ENCODE measurements at regions of chr2 and their contacts with region 1.

Region 1: DNA sequence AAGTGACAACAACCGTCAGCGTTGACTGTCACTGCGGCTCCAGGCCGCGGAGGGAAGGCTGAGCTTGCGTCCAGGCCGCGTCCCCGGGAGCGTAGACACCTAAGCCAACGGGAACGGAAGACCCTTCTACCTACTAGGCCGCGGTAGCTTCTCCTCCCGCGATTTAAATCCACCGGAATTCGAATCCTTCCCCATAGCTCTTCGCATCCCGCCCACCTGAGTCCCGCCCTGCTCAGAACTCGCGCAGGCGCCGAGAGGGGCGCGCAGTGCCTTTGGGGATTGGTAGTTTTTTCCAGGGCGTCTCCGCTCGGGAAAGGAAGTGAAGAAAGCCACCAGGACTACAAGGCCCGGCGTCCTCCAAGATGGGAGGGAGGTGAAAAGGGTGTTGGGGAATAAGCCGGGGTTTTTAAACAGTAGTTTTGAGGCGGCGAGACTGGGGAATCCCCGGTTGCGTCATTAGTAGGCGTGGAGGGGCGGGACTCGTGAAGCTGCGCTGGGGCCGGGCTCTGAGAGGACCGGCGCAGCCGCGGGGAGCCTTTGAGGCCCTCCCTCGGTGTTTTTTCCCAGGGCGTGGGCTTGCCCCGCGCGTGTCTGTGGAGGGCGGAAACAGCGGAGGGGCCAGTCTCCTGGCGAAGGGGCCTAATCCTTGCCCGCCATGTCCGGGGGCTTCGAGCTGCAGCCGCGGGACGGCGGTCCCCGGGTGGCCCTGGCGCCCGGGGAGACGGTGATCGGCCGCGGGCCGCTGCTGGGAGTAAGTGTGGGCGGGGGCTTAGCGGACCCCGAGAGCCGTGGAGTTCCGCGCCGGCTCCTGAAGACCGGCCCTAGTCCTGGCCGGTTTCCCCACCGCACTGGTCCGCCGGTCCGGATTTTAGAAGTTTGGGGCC is at the starts of genes APLF and FBXO48:
- DNase-seq: peak; percentile 91 to 92
- H3K4me3 ChIP-seq: peak within 1 kb of the TSS; percentile 84 to 95 (median 94)
- H3K27ac ChIP-seq: peak within 1 kb of the TSS; percentile 90
- H3K4me1 ChIP-seq: no peaks in the 10 kb centered on the region; a peak in 1 of 7 replicates
- H3K27me3 ChIP-seq: no peaks in the 10 kb centered on the region
- CTCF ChIP-seq: no peak
- EP300 ChIP-seq: no peak
- POLR2A ChIP-seq: peak; percentile 80 to 85
- RAD21 ChIP-seq: no peak
- total RNA-seq, gene APLF: 4.4 and 4.9 TPM in 2 replicates
- total RNA-seq, gene FBXO48: 1.1 TPM in 2 replicates

Region 2: DNA sequence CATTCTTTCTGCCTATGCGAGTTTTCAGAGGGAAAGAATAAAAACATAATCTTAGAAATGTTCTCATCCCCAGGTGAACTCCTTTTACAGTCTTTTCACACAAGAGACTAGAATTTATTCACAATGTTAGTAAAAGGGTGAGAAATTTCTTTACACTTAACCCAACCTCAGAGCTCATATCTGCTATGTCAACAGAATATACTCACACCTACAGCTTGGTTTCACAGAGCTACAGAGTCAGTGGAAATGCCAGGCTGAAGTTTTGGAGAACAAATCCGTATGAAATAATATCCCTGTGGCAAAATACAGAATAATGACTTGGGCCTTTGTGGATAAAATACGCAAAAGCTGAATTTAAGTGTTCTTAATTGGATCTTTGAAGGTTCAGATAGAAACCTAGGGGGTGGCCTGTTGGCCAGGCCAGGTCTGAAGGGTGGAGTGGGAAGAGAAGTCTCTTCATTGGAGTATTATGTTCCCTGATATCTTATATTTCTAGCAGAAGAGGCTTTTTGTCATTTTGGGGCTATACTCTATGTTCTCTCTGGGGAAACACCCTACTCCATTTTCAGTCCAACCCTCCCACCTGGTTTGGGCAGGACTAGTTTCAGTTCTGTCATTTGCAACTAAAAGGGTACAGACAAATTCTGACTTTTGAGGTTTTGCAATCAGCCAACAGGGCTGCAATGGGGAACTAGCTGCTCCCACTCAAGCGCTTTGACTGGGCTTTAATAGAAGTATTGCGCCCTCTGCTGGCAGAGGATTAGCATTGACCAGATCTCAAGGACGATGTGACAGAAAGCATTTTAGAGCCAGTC is 25.9 kb before region 1 on chr2:
- CTCF ChIA-PET with region 1: interaction called, 12 read pairs
- POLR2A ChIA-PET with region 1: no interaction called
- DNase-seq: peak; percentile 29 to 79
- H3K4me3 ChIP-seq: no peak overlapping the region
- H3K27ac ChIP-seq: no peak overlapping the region
- H3K4me1 ChIP-seq: no peaks in the 10 kb centered on the region
- H3K27me3 ChIP-seq: no peaks in the 10 kb centered on the region
- CTCF ChIP-seq: peak; percentile 46 to 98 (median 92)
- EP300 ChIP-seq: no peak
- POLR2A ChIP-seq: no peak
- RAD21 ChIP-seq: peak; percentile 91 to 97

Region 3: GRCh38 chr2:68709421-68709911 is 242.1 kb after region 1 on chr2:
- CTCF ChIA-PET with region 1: interaction called, 12 read pairs
- POLR2A ChIA-PET with region 1: no interaction called
- DNase-seq: peak in 1 of 2 experiments; percentile 52
- H3K4me3 ChIP-seq: no peak overlapping the region
- H3K27ac ChIP-seq: no peak overlapping the region
- H3K4me1 ChIP-seq: peaks cover 0 to 2% (median 1%) of the 10 kb centered on the region in 4 experiments; a peak in 2 of 7 replicates
- H3K27me3 ChIP-seq: no peaks in the 10 kb centered on the region
- CTCF ChIP-seq: peak; percentile 36 to 73 (median 67)
- EP300 ChIP-seq: no peak
- POLR2A ChIP-seq: no peak
- RAD21 ChIP-seq: peak; percentile 54 to 69

Region 4: DNA sequence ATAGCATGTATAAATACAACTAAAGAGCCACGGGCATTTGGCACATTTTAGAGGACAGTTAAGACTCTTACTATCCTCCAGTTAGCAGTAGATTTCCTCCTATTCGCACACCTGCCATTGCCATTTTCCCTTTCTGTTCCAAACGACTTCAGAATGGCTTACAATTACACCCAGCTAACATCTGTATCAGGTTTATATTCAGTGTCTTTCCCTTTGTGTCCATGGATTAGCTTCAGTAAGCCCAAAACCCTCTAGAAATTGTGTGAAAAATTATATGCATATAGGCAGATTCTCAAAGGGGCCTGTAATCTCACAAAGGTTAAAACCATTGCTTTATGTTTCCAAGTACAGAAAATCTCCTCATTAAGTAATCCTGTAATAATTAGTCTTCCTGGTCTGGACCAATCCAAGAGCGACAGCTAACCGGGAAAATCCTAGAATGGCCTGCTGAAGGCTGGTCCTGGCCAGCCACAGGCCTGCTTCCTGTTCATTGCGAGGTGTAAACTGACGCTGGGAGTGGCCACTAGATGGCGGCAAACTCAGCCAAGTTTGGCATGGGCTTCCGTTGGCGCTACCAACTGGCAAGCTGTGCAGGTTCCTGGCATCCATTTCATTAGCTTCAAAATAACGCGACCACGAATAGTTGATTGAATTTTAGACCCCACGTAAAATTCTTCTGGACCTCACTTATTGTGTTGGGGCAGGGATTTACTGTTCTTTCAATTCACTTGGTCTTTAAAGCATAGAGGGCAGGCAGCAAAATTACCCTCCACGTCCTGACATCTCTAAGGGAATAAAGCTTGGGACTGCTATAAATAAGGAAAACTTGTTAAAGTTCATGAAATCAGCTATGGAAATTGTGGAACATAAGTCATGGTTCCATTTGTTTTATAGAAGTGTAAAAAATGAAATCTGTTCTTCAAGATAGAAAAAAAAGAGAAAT is 284.3 kb after region 1 on chr2:
- CTCF ChIA-PET with region 1: interaction called, 10 read pairs
- POLR2A ChIA-PET with region 1: interaction called, 3 read pairs
- DNase-seq: peak; percentile 69 to 95
- H3K4me3 ChIP-seq: no peak overlapping the region
- H3K27ac ChIP-seq: no peak overlapping the region
- H3K4me1 ChIP-seq: peaks cover 0 to 3% (median 0%) of the 10 kb centered on the region in 4 experiments; a peak in 1 of 7 replicates
- H3K27me3 ChIP-seq: no peaks in the 10 kb centered on the region
- CTCF ChIP-seq: peak; percentile 93 to 97 (median 96)
- EP300 ChIP-seq: 0 out of 3 replicates have a peak, but pooled peaks of 1 of the 2 experiments have one; percentile 14
- POLR2A ChIP-seq: no peak
- RAD21 ChIP-seq: peak; percentile 87 to 94

Region 5: DNA sequence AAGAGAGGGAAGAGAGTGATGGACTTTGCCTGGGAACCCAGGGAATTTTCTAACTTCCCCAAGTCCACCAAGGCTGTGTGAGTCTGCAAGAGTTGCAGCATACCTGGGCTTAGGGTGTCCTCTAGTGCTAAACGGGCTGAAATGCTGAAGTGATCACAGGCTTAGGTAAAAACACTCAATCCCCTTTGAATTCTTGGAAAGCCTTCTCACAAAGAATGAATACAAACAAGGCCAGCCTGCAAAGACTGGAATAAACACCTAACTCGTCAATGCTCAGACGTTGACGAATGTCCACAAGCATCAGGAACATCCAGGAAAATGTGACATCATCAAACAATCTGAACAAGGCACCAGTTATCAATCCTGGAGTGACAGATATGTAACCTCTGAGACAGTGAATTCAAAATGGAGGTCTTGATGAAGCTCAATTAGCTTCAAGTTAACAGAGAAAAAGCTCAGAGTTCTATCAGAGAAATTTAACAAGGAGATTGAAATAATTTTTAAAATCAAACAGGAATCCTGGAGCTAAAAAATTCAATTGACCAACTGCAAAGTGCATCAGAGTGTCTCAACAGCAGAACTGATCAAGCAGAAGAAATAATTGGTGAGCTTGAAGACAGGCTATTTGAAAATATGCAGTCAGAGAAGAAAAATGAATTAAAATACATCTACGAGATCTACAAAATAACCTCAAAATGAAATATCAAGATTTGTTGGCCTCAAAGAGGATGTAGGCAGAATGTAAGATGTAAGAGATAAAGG is 434.1 kb after region 1 on chr2:
- CTCF ChIA-PET with region 1: interaction called, 14 read pairs
- POLR2A ChIA-PET with region 1: no interaction called
- DNase-seq: no peak
- H3K4me3 ChIP-seq: no peak overlapping the region
- H3K27ac ChIP-seq: no peak overlapping the region
- H3K4me1 ChIP-seq: no peaks in the 10 kb centered on the region
- H3K27me3 ChIP-seq: no peaks in the 10 kb centered on the region
- CTCF ChIP-seq: peak in 2 of 3 experiments; percentile 72 to 79; a peak in 3 of 4 replicates
- EP300 ChIP-seq: no peak
- POLR2A ChIP-seq: no peak
- RAD21 ChIP-seq: peak; percentile 89 to 94

Region 6: GRCh38 chr2:68925295-68925896 is 458.1 kb after region 1 on chr2:
- CTCF ChIA-PET with region 1: interaction called, 46 read pairs
- POLR2A ChIA-PET with region 1: no interaction called
- DNase-seq: no peak
- H3K4me3 ChIP-seq: no peak overlapping the region
- H3K27ac ChIP-seq: no peak overlapping the region
- H3K4me1 ChIP-seq: no peaks in the 10 kb centered on the region; a peak in 1 of 7 replicates
- H3K27me3 ChIP-seq: no peaks in the 10 kb centered on the region
- CTCF ChIP-seq: peak in 2 of 3 experiments; percentile 86 to 88; a peak in 3 of 4 replicates
- EP300 ChIP-seq: no peak
- POLR2A ChIP-seq: no peak
- RAD21 ChIP-seq: peak; percentile 95 to 96

Region 7: DNA sequence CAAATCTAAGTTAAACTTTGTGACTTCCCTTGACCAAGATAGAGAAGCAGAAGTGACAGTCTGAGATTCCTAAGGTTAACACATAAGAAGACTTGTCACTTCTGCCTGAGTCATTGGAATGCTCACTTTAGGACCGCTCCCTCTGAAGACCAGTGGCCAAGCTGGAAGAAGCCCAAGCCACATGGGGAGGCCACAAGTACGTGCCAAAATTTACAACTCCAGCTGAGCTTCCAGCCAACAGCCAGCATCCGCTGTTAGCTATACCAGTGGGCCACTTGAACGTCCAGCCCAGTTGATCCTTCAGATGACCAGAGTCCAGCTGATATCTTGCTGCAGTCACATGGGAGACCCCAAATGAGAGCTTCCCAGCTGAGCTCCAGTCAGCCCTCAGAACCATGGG is 527.5 kb after region 1 on chr2:
- CTCF ChIA-PET with region 1: no interaction called
- POLR2A ChIA-PET with region 1: no interaction called
- DNase-seq: no peak
- H3K4me3 ChIP-seq: no peak overlapping the region
- H3K27ac ChIP-seq: no peak overlapping the region
- H3K4me1 ChIP-seq: no peaks in the 10 kb centered on the region
- H3K27me3 ChIP-seq: no peaks in the 10 kb centered on the region
- CTCF ChIP-seq: no peak
- EP300 ChIP-seq: no peak
- POLR2A ChIP-seq: no peak
- RAD21 ChIP-seq: no peak